ENCODE measurements at regions of chr7 and their contacts with region 1.

Region 1: GRCh38 chr7:26090927-26091519 is 61.0 kb upstream of the NFE2L3 start:
- DNase-seq: peak; percentile 20
- ATAC-seq: peak; percentile 59
- H3K4me3 Mint-ChIP-seq: peak overlapping the region; percentile 1
- H3K27ac Mint-ChIP-seq: peak overlapping the region; percentile 33
- H3K4me1 Mint-ChIP-seq: peaks cover 20% of the 10 kb centered on the region
- H3K27me3 Mint-ChIP-seq: no peaks in the 10 kb centered on the region
- CTCF ChIP-seq: peak; percentile 78

Region 2: DNA sequence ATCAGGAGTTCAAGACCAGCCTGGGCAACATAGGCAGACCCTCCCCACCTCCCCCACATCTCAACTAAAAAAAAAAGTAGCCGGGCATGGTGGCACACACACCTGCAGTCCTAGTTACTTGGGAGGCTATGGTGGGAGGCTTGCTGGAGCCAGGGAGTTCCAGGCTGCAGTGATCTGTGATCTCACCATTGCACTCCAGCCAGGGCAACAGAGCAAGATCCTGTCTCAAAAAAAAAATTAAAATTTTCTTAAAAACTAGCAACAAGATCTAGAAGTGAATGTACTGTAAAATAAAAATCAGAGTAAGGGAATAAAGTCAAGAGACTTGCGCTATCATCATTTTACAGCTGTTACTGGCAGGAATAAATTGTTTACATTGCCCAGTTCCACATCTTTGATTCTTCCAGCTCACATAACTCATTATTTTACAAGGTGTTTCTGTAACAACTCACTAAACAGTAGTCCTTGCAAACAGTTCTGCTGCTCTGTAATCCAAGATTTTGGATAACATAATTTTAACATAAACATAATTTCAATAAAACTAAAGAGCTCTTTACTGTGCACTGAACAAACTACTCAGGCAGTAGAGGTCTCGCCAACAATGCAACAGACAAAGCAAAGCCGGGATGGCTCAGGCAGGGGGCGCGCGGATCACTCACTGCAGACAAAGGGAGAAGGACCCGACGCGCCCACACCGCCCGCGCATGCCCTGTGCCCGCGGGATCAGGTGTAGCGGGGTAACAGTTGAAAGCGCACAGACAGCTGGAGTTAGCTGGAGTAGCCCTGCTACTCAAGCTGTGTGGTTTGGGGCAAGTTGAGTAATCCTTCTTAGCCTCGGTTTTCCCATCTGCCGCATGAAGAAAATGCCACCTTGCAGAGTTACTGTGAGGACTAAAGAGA is 12.3 kb before region 1 on chr7:
- CTCF ChIA-PET with region 1: interaction called, 88 read pairs
- POLR2A ChIA-PET with region 1: interaction called, 4 read pairs
- intact Hi-C with region 1: no loop called
- DNase-seq: peak; percentile 92
- ATAC-seq: peak; percentile 99
- H3K4me3 Mint-ChIP-seq: no peak overlapping the region
- H3K27ac Mint-ChIP-seq: no peak overlapping the region
- H3K4me1 Mint-ChIP-seq: peaks cover 6% of the 10 kb centered on the region
- H3K27me3 Mint-ChIP-seq: peaks cover 18% of the 10 kb centered on the region
- CTCF ChIP-seq: peak; percentile 75

Region 3: GRCh38 chr7:26135511-26135910 is 44.5 kb after region 1 on chr7:
- CTCF ChIA-PET with region 1: interaction called, 20 read pairs
- POLR2A ChIA-PET with region 1: interaction called, 3 read pairs
- intact Hi-C with region 1: no loop called
- DNase-seq: no peak
- ATAC-seq: no peak
- H3K4me3 Mint-ChIP-seq: no peak overlapping the region
- H3K27ac Mint-ChIP-seq: no peak overlapping the region
- H3K4me1 Mint-ChIP-seq: no peaks in the 10 kb centered on the region
- H3K27me3 Mint-ChIP-seq: no peaks in the 10 kb centered on the region
- CTCF ChIP-seq: no peak

Region 4: DNA sequence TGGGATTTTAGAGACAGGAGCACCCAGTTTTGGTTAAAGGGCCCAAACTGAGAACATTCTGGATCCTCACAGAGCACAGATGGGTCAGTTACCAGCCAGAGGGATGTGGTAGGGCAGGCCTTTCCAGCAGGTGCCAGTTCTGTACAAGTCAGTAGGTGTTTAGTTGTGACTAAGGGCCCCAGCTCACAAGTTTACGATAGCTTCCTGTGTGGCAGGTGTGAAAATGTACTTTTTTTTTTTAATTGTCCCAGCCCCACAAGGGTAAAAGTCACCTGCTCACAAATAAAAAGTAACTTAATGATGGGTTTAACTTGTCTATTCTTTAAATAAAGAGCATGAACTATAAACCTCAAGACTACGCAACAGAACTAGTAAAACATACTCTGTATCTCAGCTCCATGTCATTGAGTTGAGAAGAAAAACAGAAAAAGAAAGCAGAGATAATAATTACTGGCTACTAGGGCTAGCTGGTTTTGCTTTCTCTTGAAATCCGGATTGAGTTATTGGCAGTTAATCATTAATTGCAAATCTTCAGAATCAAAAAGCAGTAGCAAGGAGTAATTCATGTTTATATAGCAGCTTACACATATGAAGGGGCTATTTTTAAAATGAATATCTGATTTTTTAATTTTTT is 76.4 kb after region 1 on chr7:
- CTCF ChIA-PET with region 1: interaction called, 10 read pairs
- POLR2A ChIA-PET with region 1: interaction called, 8 read pairs
- intact Hi-C with region 1: no loop called
- DNase-seq: peak; percentile 70
- ATAC-seq: peak; percentile 85
- H3K4me3 Mint-ChIP-seq: peak overlapping the region; percentile 9
- H3K27ac Mint-ChIP-seq: peak overlapping the region; percentile 86
- H3K4me1 Mint-ChIP-seq: peaks cover 47% of the 10 kb centered on the region
- H3K27me3 Mint-ChIP-seq: no peaks in the 10 kb centered on the region
- CTCF ChIP-seq: no peak

Region 5: DNA sequence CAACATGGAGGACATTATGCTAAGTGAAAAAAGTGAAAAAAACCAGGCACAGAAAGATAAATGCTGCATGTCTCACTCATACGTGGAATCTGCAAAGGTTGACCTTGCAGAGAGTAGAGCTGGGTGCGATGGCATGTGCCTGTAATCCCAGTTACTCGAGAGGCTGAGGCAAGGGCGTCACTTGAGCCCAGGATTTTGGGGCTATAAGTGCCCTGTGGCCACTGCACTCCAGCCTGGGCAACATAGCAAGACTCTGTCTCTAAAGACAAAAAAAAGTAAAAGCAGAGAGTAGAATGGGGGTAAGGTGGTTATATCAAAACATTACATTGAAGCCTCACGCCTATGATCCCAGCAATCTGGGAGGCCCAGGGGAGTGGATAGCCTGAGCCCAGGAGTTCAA is 133.3 kb after region 1 on chr7:
- CTCF ChIA-PET with region 1: no interaction called
- POLR2A ChIA-PET with region 1: no interaction called
- intact Hi-C with region 1: no loop called
- DNase-seq: no peak
- ATAC-seq: no peak
- H3K4me3 Mint-ChIP-seq: no peak overlapping the region
- H3K27ac Mint-ChIP-seq: no peak overlapping the region
- H3K4me1 Mint-ChIP-seq: no peaks in the 10 kb centered on the region
- H3K27me3 Mint-ChIP-seq: peaks cover 3% of the 10 kb centered on the region
- CTCF ChIP-seq: no peak

Region 6: GRCh38 chr7:26284995-26285632 is 194.1 kb after region 1 on chr7:
- CTCF ChIA-PET with region 1: interaction called, 23 read pairs
- POLR2A ChIA-PET with region 1: no interaction called
- intact Hi-C with region 1: no loop called
- DNase-seq: peak; percentile 22
- ATAC-seq: peak; percentile 96
- H3K4me3 Mint-ChIP-seq: no peak overlapping the region
- H3K27ac Mint-ChIP-seq: no peak overlapping the region
- H3K4me1 Mint-ChIP-seq: peaks cover 10% of the 10 kb centered on the region
- H3K27me3 Mint-ChIP-seq: no peaks in the 10 kb centered on the region
- CTCF ChIP-seq: peak; percentile 51

Region 7: GRCh38 chr7:26356929-26357798 is 266.1 kb after region 1 on chr7:
- CTCF ChIA-PET with region 1: interaction called, 71 read pairs
- POLR2A ChIA-PET with region 1: no interaction called
- intact Hi-C with region 1: no loop called
- DNase-seq: no peak
- ATAC-seq: no peak
- H3K4me3 Mint-ChIP-seq: no peak overlapping the region
- H3K27ac Mint-ChIP-seq: no peak overlapping the region
- H3K4me1 Mint-ChIP-seq: peaks cover 3% of the 10 kb centered on the region
- H3K27me3 Mint-ChIP-seq: no peaks in the 10 kb centered on the region
- CTCF ChIP-seq: no peak